ENCODE measurements at regions of chr5 and their contacts with region 1.

Region 1: GRCh38 chr5:175729829-175730277 is 72.0 kb downstream of the HRH2 start:
- DNase-seq: peak; percentile 90
- ATAC-seq: peak; percentile 97
- H3K4me3 ChIP-seq: no peak overlapping the region
- H3K27ac ChIP-seq: no peak overlapping the region
- H3K4me1 ChIP-seq: peaks cover 0 to 4% of the 10 kb centered on the region in 2 experiments; a peak in 3 of 4 replicates
- H3K27me3 ChIP-seq: no peaks in the 10 kb centered on the region
- CTCF ChIP-seq: peak; percentile 94 to 99 (median 99)
- POLR2A ChIP-seq: no peak
- RAD21 ChIP-seq: peak; percentile 100

Region 2: GRCh38 chr5:175534070-175534932 is 195.6 kb before region 1 on chr5:
- CTCF ChIA-PET with region 1: interaction called, 27 read pairs
- POLR2A ChIA-PET with region 1: no interaction called
- RAD21 ChIA-PET with region 1: interaction called in 1 of 2 experiments, 4 read pairs
- intact Hi-C with region 1: no loop called
- DNase-seq: peak; percentile 51
- ATAC-seq: peak; percentile 96
- H3K4me3 ChIP-seq: no peak overlapping the region
- H3K27ac ChIP-seq: no peak overlapping the region
- H3K4me1 ChIP-seq: peaks cover 0 to 5% of the 10 kb centered on the region in 2 experiments; a peak in 1 of 4 replicates
- H3K27me3 ChIP-seq: no peaks in the 10 kb centered on the region
- CTCF ChIP-seq: peak; percentile 99 to 100 (median 100)
- POLR2A ChIP-seq: no peak
- RAD21 ChIP-seq: peak; percentile 99

Region 3: GRCh38 chr5:175718401-175719108 is 11.3 kb before region 1 on chr5:
- CTCF ChIA-PET with region 1: interaction called, 13 read pairs
- POLR2A ChIA-PET with region 1: no interaction called
- RAD21 ChIA-PET with region 1: interaction called in 1 of 2 experiments, 3 read pairs
- intact Hi-C with region 1: no loop called
- DNase-seq: peak; percentile 16
- ATAC-seq: peak; percentile 52; the same call in 1 of the 2 replicates
- H3K4me3 ChIP-seq: no peak overlapping the region
- H3K27ac ChIP-seq: no peak overlapping the region
- H3K4me1 ChIP-seq: no peaks in the 10 kb centered on the region
- H3K27me3 ChIP-seq: no peaks in the 10 kb centered on the region
- CTCF ChIP-seq: peak; percentile 79 to 88 (median 86)
- POLR2A ChIP-seq: no peak
- RAD21 ChIP-seq: peak; percentile 78

Region 4: GRCh38 chr5:175746851-175747250 is 17.0 kb after region 1 on chr5:
- CTCF ChIA-PET with region 1: interaction called, 11 read pairs
- POLR2A ChIA-PET with region 1: interaction called, 4 read pairs
- RAD21 ChIA-PET with region 1: no interaction called
- intact Hi-C with region 1: no loop called
- DNase-seq: peak; percentile 36
- ATAC-seq: peak; percentile 95
- H3K4me3 ChIP-seq: peak overlapping the region; percentile 19 to 21; a peak in 3 of 4 replicates
- H3K27ac ChIP-seq: no peak overlapping the region
- H3K4me1 ChIP-seq: peaks cover 0 to 5% of the 10 kb centered on the region in 2 experiments; a peak in 2 of 4 replicates
- H3K27me3 ChIP-seq: peaks cover 7% of the 10 kb centered on the region; the same call in 1 of the 2 replicates
- CTCF ChIP-seq: no peak
- POLR2A ChIP-seq: no peak
- RAD21 ChIP-seq: no peak

Region 5: DNA sequence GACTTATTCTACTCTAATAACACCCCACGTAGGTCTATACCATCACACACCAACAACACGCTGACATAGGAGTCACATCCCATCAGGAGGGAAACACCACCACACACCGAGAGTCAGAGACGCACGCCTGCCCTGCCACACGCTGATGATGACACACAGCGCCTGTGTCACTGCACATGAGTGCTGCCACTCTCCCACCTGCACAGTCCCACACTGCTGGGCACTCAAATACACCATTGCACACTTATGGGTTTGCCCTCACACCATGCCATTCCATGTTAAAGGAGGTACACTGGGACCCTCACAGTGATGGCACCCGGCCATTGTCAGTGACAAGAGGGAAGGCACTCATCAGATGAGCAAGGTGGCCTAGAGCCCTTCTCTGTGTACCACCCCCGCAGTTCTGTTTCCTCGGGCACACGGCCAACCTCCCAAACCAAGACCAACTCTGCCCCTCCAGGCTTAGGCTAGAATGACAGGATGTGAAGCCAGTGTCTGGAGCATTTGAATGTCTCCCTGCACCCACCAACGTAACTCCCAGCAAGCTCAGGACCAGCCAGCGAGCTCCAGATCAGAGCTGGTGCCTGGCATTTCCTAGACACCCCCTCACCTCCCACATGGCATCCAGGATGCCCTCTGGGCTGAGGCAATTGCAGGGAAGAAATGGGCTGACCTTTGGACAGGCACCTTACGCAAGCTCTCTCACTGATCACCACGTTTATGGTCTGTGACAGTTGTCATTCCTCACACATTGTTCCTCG is 137.9 kb after region 1 on chr5:
- CTCF ChIA-PET with region 1: interaction called, 19 read pairs
- POLR2A ChIA-PET with region 1: no interaction called
- RAD21 ChIA-PET with region 1: interaction called, 7 to 14 read pairs
- intact Hi-C with region 1: loop called (anchors 1 kb)
- DNase-seq: peak; percentile 48
- ATAC-seq: peak; percentile 92
- H3K4me3 ChIP-seq: no peak overlapping the region
- H3K27ac ChIP-seq: no peak overlapping the region
- H3K4me1 ChIP-seq: peaks cover 13 to 45% of the 10 kb centered on the region in 2 experiments
- H3K27me3 ChIP-seq: peaks cover 6% of the 10 kb centered on the region; the same call in 1 of the 2 replicates
- CTCF ChIP-seq: peak; percentile 66 to 71 (median 70)
- POLR2A ChIP-seq: no peak
- RAD21 ChIP-seq: peak; percentile 85

Region 6: DNA sequence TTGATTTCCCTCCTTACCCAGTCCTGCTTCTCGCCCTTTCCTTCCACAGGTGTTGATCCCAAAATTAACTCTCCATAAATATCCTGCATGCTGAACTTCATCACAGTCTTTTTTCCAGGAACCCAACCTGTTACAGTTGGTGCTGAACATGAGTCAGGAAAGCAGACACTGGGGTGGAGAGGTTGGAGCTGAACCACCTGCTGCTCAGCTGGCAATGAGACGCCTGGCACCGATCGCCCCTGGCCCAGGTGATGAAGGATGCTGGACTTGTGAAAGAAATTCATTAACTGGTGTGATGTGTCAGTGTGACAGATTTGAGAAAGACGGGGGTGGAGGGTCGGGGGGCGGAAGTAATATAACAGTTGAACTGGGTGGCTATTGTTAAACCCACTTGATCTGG is 172.2 kb after region 1 on chr5:
- CTCF ChIA-PET with region 1: interaction called, 6 read pairs
- POLR2A ChIA-PET with region 1: no interaction called
- RAD21 ChIA-PET with region 1: interaction called in 1 of 2 experiments, 3 read pairs
- intact Hi-C with region 1: loop called (anchors 2 kb)
- DNase-seq: no peak
- ATAC-seq: no peak
- H3K4me3 ChIP-seq: no peak overlapping the region
- H3K27ac ChIP-seq: no peak overlapping the region
- H3K4me1 ChIP-seq: no peaks in the 10 kb centered on the region
- H3K27me3 ChIP-seq: no peaks in the 10 kb centered on the region
- CTCF ChIP-seq: no peak
- POLR2A ChIP-seq: no peak
- RAD21 ChIP-seq: no peak